Activated B cell treated with CpG ODN at 0.5 μM for 24 hours (primary cell): ENCODE measurements at regions of chr13 and their contacts with region 1.

Region 1: DNA sequence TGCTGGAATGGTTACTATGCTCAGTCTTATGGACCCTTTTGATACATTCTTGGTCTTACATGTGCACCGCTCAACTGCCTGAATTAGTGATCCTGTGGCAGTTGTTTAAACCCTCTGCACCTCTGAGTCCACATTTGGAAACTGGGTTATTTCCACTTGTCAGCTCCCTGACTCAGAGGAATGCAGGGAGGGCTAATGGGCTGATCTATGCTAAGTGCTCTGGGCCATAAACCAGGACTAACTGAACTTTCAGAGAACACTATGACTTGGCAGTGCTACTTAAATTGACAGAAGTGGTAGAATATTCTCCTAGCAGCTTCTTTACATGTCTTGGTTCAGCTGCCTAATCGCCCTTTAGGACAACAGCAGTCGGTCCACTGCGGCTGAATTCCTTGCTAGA is 26.8 kb upstream of the MED4 start:
- DNase-seq: no peak
- ATAC-seq: no peak
- H3K4me3 Mint-ChIP-seq: no peak overlapping the region
- H3K27ac Mint-ChIP-seq: no peak overlapping the region
- H3K4me1 Mint-ChIP-seq: peaks cover under 1% of the 10 kb centered on the region
- H3K27me3 Mint-ChIP-seq: peaks cover 9% of the 10 kb centered on the region
- CTCF ChIP-seq: no peak

Region 2: DNA sequence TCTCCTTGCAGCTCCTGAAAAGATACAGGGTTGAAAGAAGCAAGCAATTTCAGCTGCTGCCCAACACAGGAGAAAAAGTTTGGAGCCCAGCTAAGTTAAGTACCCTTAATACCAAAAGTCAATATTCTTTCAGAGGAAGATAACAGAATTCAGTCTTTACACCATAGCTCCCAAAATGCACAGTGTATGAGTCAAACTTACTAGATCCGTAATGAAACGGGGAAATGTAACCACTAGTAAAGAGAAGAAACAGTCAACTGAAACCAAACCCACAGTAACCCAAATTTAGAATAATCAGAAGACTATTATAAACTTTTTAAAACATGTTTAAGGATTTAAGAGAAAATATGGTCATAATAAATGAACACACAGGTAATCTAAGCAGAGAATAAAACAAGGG is 165.9 kb before region 1 on chr13:
- CTCF ChIA-PET with region 1: no interaction called
- POLR2A ChIA-PET with region 1: no interaction called
- intact Hi-C with region 1: no loop called
- DNase-seq: no peak
- ATAC-seq: no peak
- H3K4me3 Mint-ChIP-seq: no peak overlapping the region
- H3K27ac Mint-ChIP-seq: no peak overlapping the region
- H3K4me1 Mint-ChIP-seq: no peaks in the 10 kb centered on the region
- H3K27me3 Mint-ChIP-seq: no peaks in the 10 kb centered on the region
- CTCF ChIP-seq: no peak

Region 3: GRCh38 chr13:48086272-48086671 is 35.5 kb before region 1 on chr13:
- CTCF ChIA-PET with region 1: no interaction called
- POLR2A ChIA-PET with region 1: no interaction called
- intact Hi-C with region 1: no loop called
- DNase-seq: no peak
- ATAC-seq: no peak
- H3K4me3 Mint-ChIP-seq: no peak overlapping the region
- H3K27ac Mint-ChIP-seq: no peak overlapping the region
- H3K4me1 Mint-ChIP-seq: peaks cover 10% of the 10 kb centered on the region
- H3K27me3 Mint-ChIP-seq: no peaks in the 10 kb centered on the region
- CTCF ChIP-seq: no peak

Region 4: DNA sequence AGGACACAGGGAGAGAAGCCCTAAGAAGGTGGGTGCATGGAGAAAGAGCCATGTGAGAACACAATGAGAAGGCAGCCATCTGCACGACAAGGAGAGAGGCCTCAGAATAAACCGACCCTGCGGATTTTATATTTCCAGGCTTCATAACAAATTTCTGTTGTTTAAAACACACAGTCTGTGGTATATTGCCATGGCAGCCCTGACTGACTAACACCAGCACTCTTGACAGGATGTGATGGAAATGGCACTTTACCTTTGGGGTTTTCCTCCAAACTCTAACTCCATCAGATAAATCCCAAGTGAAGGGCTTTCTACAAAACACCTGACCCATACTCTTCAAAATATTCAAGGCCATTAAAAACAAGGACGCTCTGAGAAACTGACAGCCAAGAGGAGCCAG is 13.6 kb before region 1 on chr13:
- CTCF ChIA-PET with region 1: no interaction called
- POLR2A ChIA-PET with region 1: no interaction called
- intact Hi-C with region 1: loop called (anchors 2 kb)
- DNase-seq: no peak
- ATAC-seq: no peak
- H3K4me3 Mint-ChIP-seq: no peak overlapping the region
- H3K27ac Mint-ChIP-seq: no peak overlapping the region
- H3K4me1 Mint-ChIP-seq: no peaks in the 10 kb centered on the region
- H3K27me3 Mint-ChIP-seq: peaks cover 14% of the 10 kb centered on the region
- CTCF ChIP-seq: no peak